Calu3 (cell line): ENCODE measurements at regions of chr5 and their contacts with region 1.

Region 1: DNA sequence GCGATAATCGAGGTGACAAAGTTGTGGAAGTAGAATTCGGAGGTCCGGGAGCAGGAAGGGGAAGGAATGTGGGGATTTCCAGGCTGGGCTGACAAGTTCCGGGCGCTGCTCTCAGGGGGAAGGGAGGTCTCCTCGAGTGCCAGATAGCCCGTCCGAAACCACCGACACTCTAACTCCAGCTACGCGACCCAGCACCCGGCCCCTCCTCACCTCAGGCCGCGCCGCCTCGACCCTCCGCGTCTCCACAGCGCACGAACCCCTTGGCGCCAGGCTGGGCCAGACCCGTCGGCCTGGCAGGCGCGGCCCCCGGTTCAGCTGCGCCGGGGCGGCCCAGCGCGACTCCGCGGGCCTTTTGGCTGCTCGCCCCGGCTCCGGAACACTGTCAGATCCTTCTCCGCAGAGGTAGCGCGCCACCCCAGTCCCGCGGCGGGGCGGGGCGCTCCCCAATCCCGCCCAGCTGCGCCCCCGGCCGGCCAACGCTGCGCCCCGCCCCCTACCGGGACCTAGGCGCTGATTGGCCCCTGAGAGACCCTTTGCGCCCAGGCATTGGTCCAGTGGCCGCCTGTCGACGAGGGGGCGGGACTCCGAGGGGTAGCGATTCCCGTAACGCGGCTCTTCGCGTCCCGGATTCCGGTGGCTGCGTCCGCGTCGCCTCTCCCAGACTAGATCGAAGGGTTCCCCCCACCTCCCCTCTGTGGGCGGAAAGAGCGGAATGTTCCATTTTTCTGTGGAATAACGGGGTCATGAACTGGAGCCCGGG is at the start of gene IL6ST:
- DNase-seq: peak; percentile 98
- H3K4me3 Mint-ChIP-seq: peak within 1 kb of the TSS; percentile 93
- H3K27ac Mint-ChIP-seq: peak within 1 kb of the TSS; percentile 95
- H3K4me1 Mint-ChIP-seq: peaks cover 42% of the 10 kb centered on the region
- H3K27me3 Mint-ChIP-seq: no peaks in the 10 kb centered on the region
- CTCF ChIP-seq: no peak
- total RNA-seq, gene IL6ST: 93.5 and 100 TPM in 2 replicates

Region 2: GRCh38 chr5:55969956-55970355 is 24.8 kb before region 1 on chr5:
- CTCF ChIA-PET with region 1: no interaction called
- intact Hi-C with region 1: no loop called
- DNase-seq: no peak
- H3K4me3 Mint-ChIP-seq: no peak overlapping the region
- H3K27ac Mint-ChIP-seq: no peak overlapping the region
- H3K4me1 Mint-ChIP-seq: peaks cover 8% of the 10 kb centered on the region
- H3K27me3 Mint-ChIP-seq: no peaks in the 10 kb centered on the region
- CTCF ChIP-seq: no peak

Region 3: DNA sequence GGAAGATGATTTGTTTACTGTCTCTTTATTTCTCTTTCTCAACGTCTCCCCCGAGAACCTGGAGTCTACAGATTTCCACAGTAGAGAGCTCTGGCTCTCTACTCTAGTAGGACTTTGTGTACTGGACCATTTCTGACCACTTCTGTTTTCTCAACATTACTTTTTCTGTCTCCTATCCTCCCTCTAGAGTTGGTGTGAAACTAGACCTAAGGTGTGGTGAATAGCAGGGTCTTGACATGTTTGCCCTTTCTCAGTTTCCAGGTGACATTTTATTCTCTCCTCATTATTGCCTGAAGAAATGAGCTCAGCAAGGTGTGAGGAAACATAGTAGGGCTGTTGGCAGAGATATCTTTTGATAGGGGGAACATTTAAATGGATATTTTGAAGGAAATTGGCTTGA is 62.1 kb after region 1 on chr5:
- CTCF ChIA-PET with region 1: no interaction called
- intact Hi-C with region 1: loop called (anchors 5 kb)
- DNase-seq: no peak
- H3K4me3 Mint-ChIP-seq: no peak overlapping the region
- H3K27ac Mint-ChIP-seq: no peak overlapping the region
- H3K4me1 Mint-ChIP-seq: peaks cover 16% of the 10 kb centered on the region
- H3K27me3 Mint-ChIP-seq: no peaks in the 10 kb centered on the region
- CTCF ChIP-seq: no peak